H1 (cell line): ENCODE measurements at regions of chr12 and their contacts with region 1.

Region 1: GRCh38 chr12:54285150-54286041 is 4.9 kb downstream of the HNRNPA1 start:
- DNase-seq: no peak
- H3K4me3 ChIP-seq: peak overlapping the region in 1 of 4 experiments; percentile 33; a peak in 2 of 8 replicates
- H3K27ac ChIP-seq: no peak overlapping the region
- H3K4me1 ChIP-seq: peaks cover 0 to 7% (median 3%) of the 10 kb centered on the region in 4 experiments; a peak in 5 of 7 replicates
- H3K27me3 ChIP-seq: no peaks in the 10 kb centered on the region
- CTCF ChIP-seq: no peak
- EP300 ChIP-seq: no peak
- POLR2A ChIP-seq: no peak; a peak in 1 of 3 replicates
- RAD21 ChIP-seq: no peak

Region 2: DNA sequence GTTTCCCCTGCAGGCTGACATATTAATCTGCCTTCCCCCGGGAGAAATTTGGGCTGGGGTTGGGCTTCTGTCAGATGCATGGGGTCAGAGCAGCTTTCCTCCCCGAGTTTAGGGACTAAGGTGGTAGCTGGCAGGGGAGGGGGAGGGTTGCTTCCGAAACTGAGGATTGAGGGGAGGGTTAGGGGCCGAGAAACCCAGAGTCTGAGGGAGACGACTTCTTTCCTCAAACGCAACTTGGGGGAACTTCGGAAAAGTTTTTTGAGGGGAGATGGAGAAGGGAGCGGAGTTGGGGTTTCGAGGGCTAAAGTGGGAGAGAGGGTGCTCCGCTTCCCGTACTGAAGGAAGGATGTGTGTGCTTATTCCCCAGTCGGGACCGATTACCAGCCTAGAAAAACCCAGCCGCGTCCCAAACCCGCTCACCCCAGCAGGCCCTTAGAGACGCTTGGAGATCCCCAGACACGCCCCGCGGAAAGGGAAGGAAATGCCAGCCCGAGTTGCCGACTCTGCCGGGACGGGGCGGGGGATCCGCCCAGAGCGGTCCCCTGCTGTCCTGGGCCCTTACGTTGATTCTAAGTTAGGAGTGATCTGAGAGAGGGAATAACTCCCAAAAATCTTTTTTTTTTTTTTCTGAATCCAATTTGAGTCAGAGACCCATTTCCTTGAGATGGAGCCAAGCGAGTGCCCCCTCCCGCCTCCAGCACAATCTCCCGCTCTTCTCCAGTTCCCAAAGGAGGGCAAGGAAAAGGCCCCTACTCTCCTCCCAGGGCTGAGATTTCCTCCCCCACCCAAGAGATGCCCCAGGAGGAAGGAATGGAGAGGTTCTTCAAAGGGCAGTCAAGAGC is 158.5 kb before region 1 on chr12:
- CTCF ChIA-PET with region 1: no interaction called
- POLR2A ChIA-PET with region 1: no interaction called
- DNase-seq: peak in 1 of 2 experiments; percentile 66
- H3K4me3 ChIP-seq: peak overlapping the region in 3 of 4 experiments; percentile 44 to 68 (median 47); a peak in 5 of 8 replicates
- H3K27ac ChIP-seq: no peak overlapping the region
- H3K4me1 ChIP-seq: peaks cover 3 to 20% (median 14%) of the 10 kb centered on the region in 4 experiments
- H3K27me3 ChIP-seq: peaks cover 65 to 97% (median 89%) of the 10 kb centered on the region in 4 experiments
- CTCF ChIP-seq: no peak
- EP300 ChIP-seq: no peak
- POLR2A ChIP-seq: no peak
- RAD21 ChIP-seq: no peak

Region 3: DNA sequence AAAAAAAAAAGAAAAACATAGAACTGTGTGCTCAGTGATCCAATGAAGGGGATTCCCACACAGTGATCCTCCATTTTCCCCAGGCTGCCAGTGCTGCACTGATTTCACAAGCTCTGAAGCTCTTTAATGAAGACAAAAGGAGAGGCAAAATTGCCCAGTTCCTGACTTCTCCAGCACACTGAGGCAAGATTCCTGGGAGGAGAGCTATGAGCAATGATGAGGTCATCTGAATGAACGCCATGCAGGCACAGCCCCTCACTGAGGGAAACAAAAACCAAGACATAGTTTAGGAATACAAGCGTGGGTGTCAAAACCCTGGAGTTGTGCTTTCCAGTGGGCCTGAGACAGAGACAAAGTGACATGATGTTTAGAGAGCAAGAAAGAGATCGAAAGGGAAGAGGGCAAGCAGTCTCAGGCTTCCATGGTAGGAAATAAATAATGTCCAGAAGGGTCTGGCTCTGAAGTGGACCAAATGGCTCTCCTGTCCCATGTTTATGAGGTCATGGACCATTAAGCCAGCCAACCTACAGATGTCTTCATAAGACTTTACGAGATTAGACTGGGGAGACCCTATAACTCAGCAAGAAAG is 55.7 kb before region 1 on chr12:
- CTCF ChIA-PET with region 1: interaction called, 8 read pairs
- POLR2A ChIA-PET with region 1: interaction called, 53 read pairs
- DNase-seq: no peak
- H3K4me3 ChIP-seq: no peak overlapping the region
- H3K27ac ChIP-seq: 0 out of 2 replicates have a peak overlapping the region, but pooled peaks have one; percentile 0
- H3K4me1 ChIP-seq: no peaks in the 10 kb centered on the region
- H3K27me3 ChIP-seq: no peaks in the 10 kb centered on the region
- CTCF ChIP-seq: no peak
- EP300 ChIP-seq: no peak
- POLR2A ChIP-seq: no peak
- RAD21 ChIP-seq: no peak

Region 4: GRCh38 chr12:54300732-54301427 is 15.5 kb after region 1 on chr12 and contains the start of gene NFE2:
- CTCF ChIA-PET with region 1: interaction called, 618 read pairs
- POLR2A ChIA-PET with region 1: interaction called, 1,006 read pairs
- DNase-seq: peak; percentile 75 to 85
- H3K4me3 ChIP-seq: peak within 1 kb of the TSS; percentile 24 to 63 (median 46)
- H3K27ac ChIP-seq: peak within 1 kb of the TSS; percentile 75
- H3K4me1 ChIP-seq: peaks cover 12 to 32% (median 21%) of the 10 kb centered on the region in 4 experiments
- H3K27me3 ChIP-seq: peaks cover 0 to 7% (median 0%) of the 10 kb centered on the region in 4 experiments; a peak in 1 of 7 replicates
- CTCF ChIP-seq: peak in 2 of 3 experiments; percentile 21 to 35; a peak in 2 of 4 replicates
- EP300 ChIP-seq: no peak
- POLR2A ChIP-seq: peak in 1 of 2 experiments; percentile 67; a peak in 2 of 3 replicates
- RAD21 ChIP-seq: peak; percentile 8 to 17; a peak in 1 of 4 replicates
- total RNA-seq, gene NFE2: 1.4 and 2.0 TPM in 2 replicates

Region 5: DNA sequence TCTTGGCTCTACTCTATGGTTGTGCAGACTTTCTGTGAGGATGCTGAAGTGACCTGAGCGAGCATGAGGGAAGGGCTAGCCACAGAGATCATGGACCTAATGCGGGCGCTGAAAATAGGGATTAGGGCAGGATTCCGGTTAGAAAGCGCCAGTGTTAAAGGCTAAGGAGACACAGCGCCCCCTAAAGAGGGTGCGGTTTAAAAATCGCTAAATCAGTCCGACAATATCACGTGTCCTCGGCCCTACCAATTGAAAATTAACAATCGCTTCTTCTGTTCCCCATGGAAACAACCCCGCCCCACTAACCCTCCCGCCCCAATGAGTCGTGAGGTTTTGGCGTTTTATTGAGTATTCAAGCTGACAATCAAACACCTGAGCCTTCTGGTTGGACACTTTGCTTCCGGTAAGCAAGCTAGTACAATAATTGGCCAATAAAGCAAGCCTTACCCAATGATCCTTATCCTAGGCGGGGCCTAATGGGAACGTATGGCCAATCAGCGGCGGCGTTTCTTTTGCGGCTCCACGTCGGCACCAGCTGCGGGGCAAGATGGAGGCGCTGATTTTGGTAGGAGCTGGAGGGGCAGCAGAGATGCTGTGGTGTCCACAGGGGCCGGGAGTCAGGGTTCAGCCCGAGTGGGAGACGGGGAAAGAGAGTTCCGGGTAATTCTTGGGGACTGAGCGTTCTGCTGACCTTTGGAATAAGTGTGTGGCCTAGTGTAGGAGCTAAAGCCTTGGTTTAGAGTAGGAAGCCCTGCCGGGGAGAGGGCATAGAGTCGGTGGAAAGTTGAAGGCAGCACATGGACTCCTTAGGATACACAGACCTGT is 39.4 kb after region 1 on chr12 and contains the start of gene COPZ1:
- CTCF ChIA-PET with region 1: interaction called, 618 read pairs
- POLR2A ChIA-PET with region 1: interaction called, 166 read pairs
- DNase-seq: peak; percentile 87 to 97
- H3K4me3 ChIP-seq: peak within 1 kb of the TSS; percentile 79 to 97 (median 88)
- H3K27ac ChIP-seq: peak within 1 kb of the TSS; percentile 83
- H3K4me1 ChIP-seq: peaks cover 0 to 10% (median 4%) of the 10 kb centered on the region in 4 experiments; a peak in 2 of 7 replicates
- H3K27me3 ChIP-seq: no peaks in the 10 kb centered on the region
- CTCF ChIP-seq: peak; percentile 57 to 89 (median 81)
- EP300 ChIP-seq: no peak
- POLR2A ChIP-seq: peak; percentile 54 to 87
- RAD21 ChIP-seq: peak; percentile 80 to 82
- total RNA-seq, gene COPZ1: 94.2 and 103 TPM in 2 replicates

Region 6: GRCh38 chr12:54352022-54352531 is 66.7 kb after region 1 on chr12:
- CTCF ChIA-PET with region 1: interaction called, 251 read pairs
- POLR2A ChIA-PET with region 1: interaction called, 133 read pairs
- DNase-seq: peak; percentile 50 to 70
- H3K4me3 ChIP-seq: peak overlapping the region; percentile 44 to 64 (median 62)
- H3K27ac ChIP-seq: peak overlapping the region; percentile 61
- H3K4me1 ChIP-seq: peaks cover 27 to 69% (median 33%) of the 10 kb centered on the region in 4 experiments
- H3K27me3 ChIP-seq: peaks cover 0 to 9% (median 4%) of the 10 kb centered on the region in 4 experiments; a peak in 3 of 7 replicates
- CTCF ChIP-seq: no peak
- EP300 ChIP-seq: no peak
- POLR2A ChIP-seq: peak in 1 of 2 experiments; percentile 41; a peak in 1 of 3 replicates
- RAD21 ChIP-seq: no peak

Region 7: GRCh38 chr12:54452628-54453027 is 167.2 kb after region 1 on chr12:
- CTCF ChIA-PET with region 1: no interaction called
- POLR2A ChIA-PET with region 1: no interaction called
- DNase-seq: no peak
- H3K4me3 ChIP-seq: no peak overlapping the region
- H3K27ac ChIP-seq: no peak overlapping the region
- H3K4me1 ChIP-seq: no peaks in the 10 kb centered on the region
- H3K27me3 ChIP-seq: peaks cover 60 to 98% (median 79%) of the 10 kb centered on the region in 4 experiments
- CTCF ChIP-seq: no peak
- EP300 ChIP-seq: no peak
- POLR2A ChIP-seq: no peak
- RAD21 ChIP-seq: no peak